Mammary epithelial cell (primary cell): ENCODE measurements at regions of chr10 and their contacts with region 1.

Region 1: GRCh38 chr10:131207584-131208532 is 103.7 kb downstream of the TCERG1L start:
- DNase-seq: no peak
- H3K4me3 ChIP-seq: no peak overlapping the region
- H3K27ac ChIP-seq: no peak overlapping the region
- H3K4me1 ChIP-seq: no peaks in the 10 kb centered on the region
- H3K27me3 ChIP-seq: no peaks in the 10 kb centered on the region
- CTCF ChIP-seq: no peak

Region 2: DNA sequence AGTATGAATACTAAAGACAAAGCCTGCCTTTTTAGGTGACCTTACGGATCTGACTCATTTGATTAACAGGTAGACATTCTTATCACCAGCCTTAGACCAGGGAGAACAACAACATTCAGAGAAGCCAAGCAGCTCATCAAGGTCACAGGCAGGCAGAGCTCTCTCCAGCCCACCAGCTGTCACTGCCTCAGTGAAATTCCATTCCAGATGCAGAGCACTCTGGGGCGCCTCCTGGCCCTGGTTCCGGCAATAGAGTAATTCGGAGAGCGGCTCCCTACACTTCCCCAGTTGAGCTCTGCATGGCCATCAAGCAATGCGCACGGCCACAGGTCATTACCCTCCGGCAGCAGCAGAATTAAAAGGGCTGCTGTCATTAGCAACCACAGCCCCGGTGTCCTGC is 61.1 kb before region 1 on chr10:
- CTCF ChIA-PET with region 1: no interaction called
- dilution Hi-C with region 1: loop called (anchors 5 kb)
- in situ Hi-C with region 1: no loop called
- intact Hi-C with region 1: no loop called
- DNase-seq: no peak
- H3K4me3 ChIP-seq: no peak overlapping the region
- H3K27ac ChIP-seq: no peak overlapping the region
- H3K4me1 ChIP-seq: no peaks in the 10 kb centered on the region
- H3K27me3 ChIP-seq: no peaks in the 10 kb centered on the region
- CTCF ChIP-seq: no peak

Region 3: DNA sequence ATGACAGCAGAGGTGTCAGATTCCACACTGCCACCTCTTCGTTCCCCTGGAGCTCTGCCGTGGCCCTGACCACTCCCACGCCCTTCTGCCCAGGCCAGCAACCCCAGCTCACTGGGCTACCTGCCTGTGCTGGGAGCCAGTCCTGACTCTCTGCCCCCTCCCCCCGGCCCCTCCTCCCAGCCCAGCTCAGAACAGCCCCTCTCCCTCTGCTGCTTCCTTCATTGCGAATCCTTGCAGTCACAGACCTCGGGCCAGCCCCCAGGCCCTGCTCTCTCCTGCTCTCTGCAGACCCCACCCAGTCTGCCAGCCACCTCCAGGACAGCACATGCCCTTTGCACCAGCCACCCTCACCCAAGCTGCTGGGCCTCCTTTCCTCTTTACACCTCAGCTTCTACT is 43.3 kb after region 1 on chr10:
- CTCF ChIA-PET with region 1: no interaction called
- dilution Hi-C with region 1: no loop called
- in situ Hi-C with region 1: no loop called
- intact Hi-C with region 1: no loop called
- DNase-seq: no peak
- H3K4me3 ChIP-seq: no peak overlapping the region
- H3K27ac ChIP-seq: no peak overlapping the region
- H3K4me1 ChIP-seq: no peaks in the 10 kb centered on the region
- H3K27me3 ChIP-seq: no peaks in the 10 kb centered on the region
- CTCF ChIP-seq: no peak

Region 4: DNA sequence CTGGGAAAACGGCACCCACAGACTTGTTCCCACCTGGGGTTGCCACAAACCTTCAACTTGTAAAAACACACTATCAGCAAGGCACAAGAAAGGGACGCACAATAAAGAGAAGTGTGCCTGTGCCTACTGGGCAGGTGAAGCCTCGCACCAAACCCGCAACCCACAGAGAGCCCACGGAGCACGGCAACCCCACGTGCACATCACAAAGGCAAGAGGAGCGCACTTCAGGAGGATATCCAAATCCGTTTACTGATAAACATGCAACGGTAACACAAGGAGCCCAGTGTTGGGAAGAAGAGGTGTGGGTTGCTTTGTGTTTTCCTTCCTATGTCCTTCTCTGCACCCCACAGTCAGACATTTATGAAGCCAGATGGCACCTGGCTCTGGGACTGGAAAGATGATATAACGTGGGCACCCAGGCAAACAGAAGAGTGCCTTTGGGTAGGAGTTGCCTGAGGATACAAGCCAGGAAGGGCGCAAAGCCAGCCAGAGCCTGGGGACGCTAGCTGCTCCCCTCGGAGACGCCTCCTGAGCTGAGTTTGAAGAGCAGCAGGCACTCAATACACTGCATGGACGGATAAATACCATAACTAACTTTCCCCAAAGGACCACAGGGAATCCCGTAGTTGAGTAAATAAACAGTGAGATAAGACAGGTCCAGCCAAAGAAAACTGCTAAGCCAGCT is 62.1 kb after region 1 on chr10:
- CTCF ChIA-PET with region 1: no interaction called
- dilution Hi-C with region 1: loop called (anchors 5 kb)
- in situ Hi-C with region 1: no loop called
- intact Hi-C with region 1: no loop called
- DNase-seq: no peak
- H3K4me3 ChIP-seq: no peak overlapping the region
- H3K27ac ChIP-seq: no peak overlapping the region
- H3K4me1 ChIP-seq: no peaks in the 10 kb centered on the region
- H3K27me3 ChIP-seq: no peaks in the 10 kb centered on the region
- CTCF ChIP-seq: no peak